Sciatic nerve (tissue), 2 donors: ENCODE measurements at regions of chr9 and their contacts with region 1.

Region 1: GRCh38 chr9:4048441-4048840 is 251.4 kb downstream of the GLIS3 start:
- DNase-seq: no peak
- ATAC-seq: peak; percentile 70

Region 2: DNA sequence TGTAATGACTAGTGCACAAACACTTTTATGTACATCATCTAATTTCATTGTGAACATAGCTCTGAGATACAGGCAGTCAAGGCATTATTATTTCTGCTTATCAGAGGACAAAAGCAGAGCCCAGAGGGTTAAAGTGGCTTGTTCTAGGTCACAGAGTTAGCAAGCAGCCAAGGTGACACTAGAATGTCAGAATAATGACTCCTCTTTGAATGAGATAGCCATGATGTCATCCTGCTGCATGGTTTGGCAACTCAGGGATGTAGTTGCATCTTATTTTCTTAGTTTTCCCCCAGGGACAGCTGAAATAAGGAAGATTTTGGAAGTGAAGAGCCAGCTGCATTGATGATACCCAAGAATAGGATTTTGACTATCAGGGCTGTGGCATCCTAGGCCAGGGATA is 1276.8 kb before region 1 on chr9:
- intact Hi-C with region 1: loop called (anchors 10 kb)
- DNase-seq: no peak
- ATAC-seq: no peak

Region 3: DNA sequence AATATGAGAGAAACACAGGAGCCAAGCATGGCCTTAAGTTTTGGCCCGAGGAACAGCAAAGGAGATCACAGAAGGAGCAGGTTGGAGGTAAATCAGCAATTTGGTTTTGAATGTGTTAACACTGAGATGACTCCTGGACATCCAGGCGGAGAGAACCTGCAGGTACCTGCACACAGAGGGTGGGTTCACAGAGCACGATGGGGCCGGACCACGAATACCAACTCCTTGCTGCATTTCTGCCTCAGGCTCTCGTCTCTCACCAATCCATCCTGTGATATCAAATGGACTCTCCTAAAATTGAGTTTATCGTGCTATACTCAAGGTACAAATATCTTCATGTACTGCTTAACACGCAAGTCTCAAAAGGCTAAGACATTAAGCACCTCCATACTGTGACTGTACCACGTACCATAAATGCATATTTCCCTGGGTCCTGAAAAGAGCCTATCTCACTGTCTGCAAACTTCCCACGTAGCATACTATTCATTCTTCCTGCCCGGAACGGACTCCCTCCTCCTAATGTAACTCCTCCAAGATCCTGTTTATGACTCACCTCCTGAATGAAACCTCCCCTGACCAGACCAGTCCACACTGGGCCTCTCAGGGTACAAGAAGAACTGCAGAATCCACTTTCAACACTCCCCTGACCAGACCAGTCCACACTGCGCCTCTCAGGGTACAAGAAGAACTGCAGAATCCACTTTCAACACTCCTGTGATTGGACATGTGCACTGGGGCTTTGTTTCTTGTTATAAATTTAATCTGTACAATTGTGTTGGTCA is 141.8 kb before region 1 on chr9:
- intact Hi-C with region 1: no loop called
- DNase-seq: no peak
- ATAC-seq: peak; percentile 7

Region 4: GRCh38 chr9:4022435-4023067 is 25.9 kb before region 1 on chr9:
- intact Hi-C with region 1: no loop called
- DNase-seq: no peak
- ATAC-seq: no peak